Spleen (tissue), 13 donors: ENCODE measurements at regions of chr9 and their contacts with region 1.

Region 1: DNA sequence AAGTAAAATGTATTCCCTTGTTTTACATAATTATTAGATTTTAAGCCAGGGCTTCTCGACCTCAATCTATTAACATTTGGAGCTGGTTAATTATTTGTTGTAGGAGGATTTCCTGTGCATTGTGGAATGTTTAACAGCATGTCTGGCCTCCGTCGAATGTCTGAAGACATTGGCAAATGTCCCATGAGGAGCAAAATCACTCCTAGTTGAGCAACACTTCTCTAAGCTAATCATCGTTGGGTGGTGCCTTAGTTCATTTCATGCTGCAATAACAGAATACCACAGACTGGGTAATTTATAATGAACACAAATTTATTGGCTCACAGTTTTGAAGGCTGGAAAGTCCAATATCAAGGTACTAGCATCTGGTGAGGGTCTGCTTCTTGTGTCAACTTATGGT is 13.4 kb upstream of the VPS13A start:
- DNase-seq: no peak
- H3K4me3 ChIP-seq: no peak overlapping the region
- H3K27ac ChIP-seq: no peak overlapping the region
- H3K4me1 ChIP-seq: peaks cover 0 to 9% (median 7%) of the 10 kb centered on the region in 6 donors
- H3K27me3 ChIP-seq: peaks cover 0 to 6% (median 0%) of the 10 kb centered on the region in 7 donors
- CTCF ChIP-seq: no peak
- POLR2A ChIP-seq: no peak

Region 2: GRCh38 chr9:77456829-77457437 is 293.0 kb after region 1 on chr9:
- intact Hi-C with region 1: loop called (anchors 10 kb)
- DNase-seq: peak; percentile 88
- H3K4me3 ChIP-seq: no peak overlapping the region
- H3K27ac ChIP-seq: no peak overlapping the region
- H3K4me1 ChIP-seq: peaks cover 0 to 42% (median 17%) of the 10 kb centered on the region in 6 donors
- H3K27me3 ChIP-seq: peaks cover 0 to 5% (median 0%) of the 10 kb centered on the region in 7 donors
- CTCF ChIP-seq: peak; percentile 67 to 92 (median 89)
- POLR2A ChIP-seq: no peak